ENCODE measurements at regions of chr22 and their contacts with region 1.

Region 1: GRCh38 chr22:22787786-22788459 is 99.7 kb upstream of the IGLL5 start:
- DNase-seq: peak; percentile 81
- ATAC-seq: peak; percentile 90
- H3K4me3 Mint-ChIP-seq: no peak overlapping the region
- H3K27ac Mint-ChIP-seq: peak overlapping the region; percentile 30
- H3K4me1 Mint-ChIP-seq: peaks cover 25% of the 10 kb centered on the region
- H3K27me3 Mint-ChIP-seq: peaks cover 13% of the 10 kb centered on the region

Region 2: DNA sequence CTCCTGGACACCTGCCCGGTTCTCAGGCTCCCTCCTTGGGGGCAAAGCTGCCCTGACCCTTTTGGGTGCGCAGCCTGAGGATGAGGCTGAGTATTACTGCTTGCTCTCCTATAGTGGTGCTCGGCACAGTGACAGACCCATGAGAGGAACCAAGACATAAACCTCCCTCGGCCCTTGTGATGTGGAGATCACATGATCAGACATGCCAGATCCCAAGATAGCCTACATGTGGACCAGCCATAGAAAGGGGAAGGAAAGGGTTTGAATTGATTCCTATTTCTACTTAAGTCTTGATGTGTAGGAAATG is 418.0 kb before region 1 on chr22:
- CTCF ChIA-PET with region 1: no interaction called
- POLR2A ChIA-PET with region 1: no interaction called
- DNase-seq: no peak
- ATAC-seq: no peak
- H3K4me3 Mint-ChIP-seq: no peak overlapping the region
- H3K27ac Mint-ChIP-seq: no peak overlapping the region
- H3K4me1 Mint-ChIP-seq: no peaks in the 10 kb centered on the region
- H3K27me3 Mint-ChIP-seq: peaks cover 46% of the 10 kb centered on the region

Region 3: GRCh38 chr22:22728382-22728781 is 59.5 kb before region 1 on chr22:
- CTCF ChIA-PET with region 1: no interaction called
- POLR2A ChIA-PET with region 1: no interaction called
- DNase-seq: no peak
- ATAC-seq: no peak
- H3K4me3 Mint-ChIP-seq: no peak overlapping the region
- H3K27ac Mint-ChIP-seq: no peak overlapping the region
- H3K4me1 Mint-ChIP-seq: peaks cover 10% of the 10 kb centered on the region
- H3K27me3 Mint-ChIP-seq: peaks cover 13% of the 10 kb centered on the region

Region 4: DNA sequence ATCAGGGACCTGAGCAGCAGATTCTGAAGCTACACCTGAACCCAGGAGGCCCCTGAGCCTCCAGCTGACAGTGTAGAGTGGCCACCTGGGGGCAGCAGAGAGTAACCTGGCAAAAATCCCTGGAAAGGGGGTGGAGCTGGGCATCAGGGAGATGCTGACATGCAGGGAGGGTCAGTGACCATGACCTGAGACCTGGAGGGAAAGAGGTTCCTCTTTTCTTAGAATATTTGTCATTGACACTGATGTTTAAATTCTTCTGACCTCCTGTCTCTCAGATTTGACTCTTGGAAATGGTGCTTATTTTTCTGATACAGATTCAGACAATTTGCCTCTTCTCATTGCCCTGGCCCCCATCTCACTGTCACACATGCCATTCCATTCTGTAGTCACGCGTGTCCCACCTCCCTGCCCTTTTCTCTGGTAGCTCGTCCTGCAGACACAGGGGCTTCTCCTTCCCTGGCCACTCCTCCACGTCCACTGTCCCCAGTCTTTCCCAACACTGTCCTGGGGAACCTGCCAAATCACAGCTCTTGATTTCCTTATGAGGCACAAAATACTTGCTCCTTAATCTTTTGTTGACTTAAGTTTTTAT is 17.5 kb before region 1 on chr22:
- CTCF ChIA-PET with region 1: interaction called, 56 read pairs
- POLR2A ChIA-PET with region 1: no interaction called
- DNase-seq: peak; percentile 59
- ATAC-seq: peak; percentile 69
- H3K4me3 Mint-ChIP-seq: no peak overlapping the region
- H3K27ac Mint-ChIP-seq: no peak overlapping the region
- H3K4me1 Mint-ChIP-seq: no peaks in the 10 kb centered on the region
- H3K27me3 Mint-ChIP-seq: peaks cover 18% of the 10 kb centered on the region

Region 5: DNA sequence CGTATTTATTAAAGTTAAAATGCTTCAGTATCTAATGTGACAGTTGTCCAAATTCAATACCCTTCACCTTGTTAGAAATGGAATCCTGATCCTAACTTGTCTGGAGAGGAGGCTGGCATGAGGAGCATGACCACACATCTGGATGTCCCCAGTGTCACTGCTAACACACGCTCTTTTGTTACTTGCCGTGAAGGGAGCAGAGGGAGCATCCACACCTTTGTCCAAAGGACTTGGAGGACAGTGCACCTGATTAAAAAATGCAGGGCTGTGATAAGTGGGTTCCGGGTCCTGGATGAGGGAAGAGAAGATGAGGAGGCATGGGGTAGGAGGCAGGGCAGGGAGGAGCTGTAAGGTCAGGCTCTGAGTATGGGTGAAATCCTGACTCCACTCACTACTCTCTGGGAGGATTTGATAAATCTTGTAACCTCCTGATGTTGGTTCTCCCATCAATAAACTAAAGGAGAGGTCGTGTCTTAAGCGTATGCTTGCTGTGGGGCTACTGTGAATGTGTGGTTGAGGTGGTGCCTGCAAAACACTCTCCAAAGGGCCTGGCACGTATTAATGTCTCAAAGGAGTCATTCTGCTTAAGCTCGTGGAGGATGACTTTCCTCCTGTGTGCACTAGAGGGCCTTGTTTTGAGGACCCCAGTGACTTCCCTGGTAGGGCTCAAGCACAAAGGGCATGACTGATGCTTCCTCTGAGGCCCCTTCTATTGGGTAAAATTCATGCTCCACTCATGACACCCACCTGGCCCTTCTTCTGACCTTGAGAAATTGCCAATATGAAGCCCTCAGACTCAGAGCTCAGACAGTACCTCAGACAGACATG is 82.9 kb after region 1 on chr22:
- CTCF ChIA-PET with region 1: interaction called, 12 read pairs
- POLR2A ChIA-PET with region 1: no interaction called
- DNase-seq: peak; percentile 27
- ATAC-seq: no peak
- H3K4me3 Mint-ChIP-seq: no peak overlapping the region
- H3K27ac Mint-ChIP-seq: no peak overlapping the region
- H3K4me1 Mint-ChIP-seq: peaks cover 13% of the 10 kb centered on the region
- H3K27me3 Mint-ChIP-seq: peaks cover 38% of the 10 kb centered on the region

Region 6: GRCh38 chr22:22877523-22878210 is 89.7 kb after region 1 on chr22:
- CTCF ChIA-PET with region 1: interaction called, 184 read pairs
- POLR2A ChIA-PET with region 1: no interaction called
- DNase-seq: peak; percentile 82
- ATAC-seq: peak; percentile 60
- H3K4me3 Mint-ChIP-seq: no peak overlapping the region
- H3K27ac Mint-ChIP-seq: no peak overlapping the region
- H3K4me1 Mint-ChIP-seq: no peaks in the 10 kb centered on the region
- H3K27me3 Mint-ChIP-seq: peaks cover 21% of the 10 kb centered on the region